Right ventricle myocardium superior (tissue), 1 donor: ENCODE measurements at regions of chr15 and their contacts with region 1.

Region 1: DNA sequence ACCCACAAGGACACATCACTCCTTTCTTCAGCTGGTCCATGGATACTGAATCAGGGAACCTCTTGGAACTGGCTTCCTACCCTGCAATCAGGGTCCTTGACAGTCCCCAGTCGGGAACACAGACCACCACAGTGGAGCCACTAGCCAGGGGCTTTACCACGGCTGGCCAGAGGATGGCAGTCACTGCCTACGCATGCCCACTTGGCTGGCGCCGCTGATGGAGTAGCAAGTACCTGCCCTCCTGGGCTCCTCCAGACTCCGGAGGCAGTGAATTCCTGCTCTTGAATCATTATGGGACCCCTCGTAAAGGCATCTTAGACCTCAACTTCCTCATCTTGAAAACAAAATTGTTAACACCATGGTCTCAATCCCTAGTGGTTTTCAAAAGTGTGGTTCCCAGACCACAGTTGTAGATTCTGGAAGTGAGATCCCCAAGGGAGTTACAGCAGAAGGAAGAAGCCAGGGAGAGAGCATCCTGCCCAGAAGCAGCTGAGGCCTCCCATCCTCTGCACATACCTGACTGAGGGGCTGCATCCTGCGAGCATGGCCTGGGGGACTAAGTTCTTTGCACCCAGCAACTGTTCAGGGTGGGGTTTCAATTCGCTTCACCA is 9.1 kb upstream of the SKIC8 start:
- DNase-seq: peak; percentile 79
- ATAC-seq: peak; percentile 94

Region 2: GRCh38 chr15:78264304-78265136 is 44.0 kb before region 1 on chr15 and contains the start of gene DNAJA4:
- intact Hi-C with region 1: no loop called
- DNase-seq: peak; percentile 85
- ATAC-seq: peak; percentile 55
- total RNA-seq, gene DNAJA4: 79.9 TPM

Region 3: GRCh38 chr15:78422571-78423340 is 114.2 kb after region 1 on chr15:
- intact Hi-C with region 1: loop called (anchors 2 kb)
- DNase-seq: peak; percentile 75
- ATAC-seq: peak; percentile 77